Activated naive CD4-positive, alpha-beta T cell treated with anti-CD3 and anti-CD28 coated beads for 36 hours (primary cell): ENCODE measurements at regions of chr1 and their contacts with region 1.

Region 1: DNA sequence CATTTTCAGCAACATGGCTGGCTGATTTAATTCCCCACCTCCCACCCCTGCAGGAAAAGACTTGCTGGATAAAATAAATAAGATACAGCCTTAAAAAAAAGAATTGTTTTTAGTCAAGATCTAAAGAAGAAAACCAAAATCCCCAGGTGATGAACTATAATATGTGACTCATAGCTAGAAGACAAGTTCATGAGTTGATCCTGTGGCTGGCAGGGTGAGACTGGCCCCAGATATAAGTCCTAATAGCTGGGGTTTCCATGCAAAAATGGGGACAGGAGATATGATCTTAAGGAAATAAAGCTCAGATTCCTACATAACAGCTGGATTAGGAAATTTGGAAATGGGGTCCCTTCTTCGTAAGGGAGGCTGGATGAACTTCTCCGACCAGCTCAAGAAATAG is 21.9 kb upstream of the RGSL1 start:
- DNase-seq: peak; percentile 10
- H3K4me3 Mint-ChIP-seq: no peak overlapping the region
- H3K27ac Mint-ChIP-seq: no peak overlapping the region
- H3K4me1 Mint-ChIP-seq: peaks cover 7% of the 10 kb centered on the region
- H3K27me3 Mint-ChIP-seq: no peaks in the 10 kb centered on the region

Region 2: DNA sequence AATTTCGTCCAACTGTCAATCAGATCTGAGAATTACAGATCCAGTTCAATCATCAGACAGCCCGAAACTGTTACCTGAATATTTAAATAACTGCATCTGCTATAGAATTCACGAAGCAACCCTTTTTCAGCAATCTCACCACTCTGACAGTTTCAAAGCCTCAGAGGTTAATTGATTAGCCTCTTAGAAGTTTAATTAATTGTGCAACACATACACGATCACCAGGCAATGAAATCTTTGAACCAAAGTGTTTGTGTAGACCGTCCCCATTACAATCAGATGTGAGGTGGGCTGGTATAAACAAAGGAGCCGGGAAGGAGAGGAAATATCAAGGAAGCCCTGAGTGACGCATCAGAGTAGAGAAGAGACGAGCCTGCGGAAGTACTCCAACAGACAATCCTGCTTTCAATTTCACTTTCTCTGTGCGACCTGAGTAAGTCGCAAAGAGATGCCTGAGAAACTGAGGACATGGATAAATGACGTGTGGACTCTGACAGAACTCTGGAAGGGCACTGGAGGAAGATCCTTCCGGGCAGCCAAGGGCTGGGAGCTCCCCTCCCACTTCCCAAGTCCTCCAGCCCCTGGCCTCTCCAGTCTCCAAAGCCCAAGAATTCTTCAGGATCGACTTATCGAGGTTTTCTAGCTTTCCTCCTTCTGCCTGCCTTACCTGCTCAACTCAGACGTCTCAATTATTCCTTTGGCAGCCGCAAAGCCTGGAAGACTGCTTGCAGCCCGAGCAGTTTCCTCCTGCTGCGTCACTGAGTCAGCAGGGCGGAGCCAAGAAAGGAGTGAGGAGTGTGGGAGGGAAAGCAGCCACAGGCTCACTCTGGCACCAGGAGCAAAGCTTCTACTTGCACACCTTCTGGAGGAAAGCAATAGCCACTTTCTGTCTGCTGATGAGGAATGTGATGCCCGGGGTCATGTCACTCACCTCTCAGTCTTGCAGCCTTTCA is 160.7 kb after region 1 on chr1 and contains the start of gene RNASEL:
- CTCF ChIA-PET with region 1: no interaction called
- intact Hi-C with region 1: loop called (anchors 2 kb)
- DNase-seq: peak; percentile 62
- H3K4me3 Mint-ChIP-seq: peak within 1 kb of the TSS; percentile 86
- H3K27ac Mint-ChIP-seq: peak within 1 kb of the TSS; percentile 98
- H3K4me1 Mint-ChIP-seq: peaks cover 49% of the 10 kb centered on the region
- H3K27me3 Mint-ChIP-seq: no peaks in the 10 kb centered on the region
- total RNA-seq, gene RNASEL: 2.5 TPM